Adrenal gland (tissue), 19 donors: ENCODE measurements at regions of chr5 and their contacts with region 1.

Region 1: GRCh38 chr5:147887024-147887627 is 8.6 kb downstream of the SCGB3A2 start:
- DNase-seq: peak in 2 of 7 donors; percentile 13 to 23
- H3K4me3 ChIP-seq: no peak overlapping the region
- H3K27ac ChIP-seq: no peak overlapping the region
- H3K4me1 ChIP-seq: no peaks in the 10 kb centered on the region
- H3K27me3 ChIP-seq: no peaks in the 10 kb centered on the region
- CTCF ChIP-seq: peak; percentile 14 to 61 (median 46)
- POLR2A ChIP-seq: no peak

Region 2: GRCh38 chr5:147699496-147700088 is 187.5 kb before region 1 on chr5:
- intact Hi-C with region 1: no loop called
- DNase-seq: no peak
- H3K4me3 ChIP-seq: no peak overlapping the region
- H3K27ac ChIP-seq: no peak overlapping the region
- H3K4me1 ChIP-seq: no peaks in the 10 kb centered on the region
- H3K27me3 ChIP-seq: no peaks in the 10 kb centered on the region
- CTCF ChIP-seq: no peak
- POLR2A ChIP-seq: no peak

Region 3: DNA sequence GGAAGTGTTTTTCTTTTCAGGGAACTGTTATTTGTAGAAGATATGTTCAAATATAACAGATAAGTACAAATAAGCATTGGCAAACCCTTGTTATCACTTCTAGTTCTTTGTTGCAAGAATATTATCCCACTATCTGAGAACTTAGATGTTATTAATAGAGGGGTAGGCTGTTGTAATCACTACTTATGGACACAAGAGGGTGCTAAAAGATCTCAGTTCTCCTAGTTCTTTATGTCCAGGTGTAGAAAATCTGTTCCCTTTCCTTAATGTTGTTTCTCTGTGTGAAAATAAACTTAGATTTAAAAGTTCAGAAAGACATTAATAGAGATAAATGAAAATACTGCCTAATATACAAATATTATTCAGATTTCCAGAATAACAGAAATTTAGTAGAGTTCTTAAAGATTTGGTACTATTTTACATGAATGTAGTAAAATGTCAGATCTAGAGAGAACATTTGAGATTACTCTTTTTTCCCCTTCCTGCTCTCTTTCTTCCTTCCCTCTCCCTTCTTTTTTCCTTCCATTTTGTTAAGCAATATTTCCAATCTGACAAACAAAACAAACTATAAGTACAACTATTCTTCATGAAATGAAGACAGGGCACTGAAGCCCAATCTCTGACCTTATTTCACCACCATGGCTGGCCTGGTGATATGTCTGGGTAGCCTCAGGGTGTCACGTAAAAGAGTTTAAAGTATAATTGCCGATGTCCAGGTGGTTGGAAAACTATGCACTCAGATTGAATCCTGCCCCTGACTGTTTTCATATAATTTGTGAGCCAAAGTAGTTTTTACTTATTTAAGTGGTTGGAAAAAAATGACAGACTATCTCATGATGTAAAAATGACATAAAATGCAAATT is 62.8 kb after region 1 on chr5:
- intact Hi-C with region 1: no loop called
- DNase-seq: no peak
- H3K4me3 ChIP-seq: no peak overlapping the region
- H3K27ac ChIP-seq: no peak overlapping the region
- H3K4me1 ChIP-seq: no peaks in the 10 kb centered on the region
- H3K27me3 ChIP-seq: peaks cover 7% of the 10 kb centered on the region
- CTCF ChIP-seq: peak; percentile 55 to 78 (median 74)
- POLR2A ChIP-seq: no peak

Region 4: DNA sequence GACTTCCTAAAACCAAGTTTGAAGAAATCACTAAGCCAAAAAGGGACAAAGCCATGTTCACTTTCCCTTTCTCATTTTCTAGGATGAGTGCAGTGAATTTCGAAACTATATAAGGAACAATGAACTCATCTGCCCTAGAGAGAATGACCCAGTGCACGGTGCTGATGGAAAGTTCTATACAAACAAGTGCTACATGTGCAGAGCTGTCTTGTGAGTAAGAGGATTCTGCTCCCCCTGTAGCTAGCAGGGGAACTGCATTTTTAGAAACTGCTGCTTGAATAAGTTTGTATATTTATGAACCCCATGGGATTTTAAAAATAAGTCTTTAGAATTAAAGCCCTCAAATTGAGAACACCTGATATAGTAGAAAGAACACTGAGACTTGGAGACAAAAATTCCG is 238.5 kb after region 1 on chr5:
- intact Hi-C with region 1: loop called in 1 of 2 experiments (anchors 10 kb)
- DNase-seq: no peak
- H3K4me3 ChIP-seq: no peak overlapping the region
- H3K27ac ChIP-seq: no peak overlapping the region
- H3K4me1 ChIP-seq: no peaks in the 10 kb centered on the region
- H3K27me3 ChIP-seq: peaks cover 3% of the 10 kb centered on the region
- CTCF ChIP-seq: no peak
- POLR2A ChIP-seq: no peak